SK-N-SH (cell line): ENCODE measurements at regions of chr11 and their contacts with region 1.

Region 1: GRCh38 chr11:7442588-7443215 is 42.6 kb upstream of the OLFML1 start:
- DNase-seq: peak; percentile 67
- H3K4me3 ChIP-seq: peak overlapping the region in 1 of 2 experiments; percentile 19; a peak in 1 of 4 replicates
- H3K27ac ChIP-seq: no peak overlapping the region
- H3K4me1 ChIP-seq: no peaks in the 10 kb centered on the region
- H3K27me3 ChIP-seq: no peaks in the 10 kb centered on the region
- CTCF ChIP-seq: peak; percentile 87
- EP300 ChIP-seq: no peak
- RAD21 ChIP-seq: peak; percentile 94

Region 2: DNA sequence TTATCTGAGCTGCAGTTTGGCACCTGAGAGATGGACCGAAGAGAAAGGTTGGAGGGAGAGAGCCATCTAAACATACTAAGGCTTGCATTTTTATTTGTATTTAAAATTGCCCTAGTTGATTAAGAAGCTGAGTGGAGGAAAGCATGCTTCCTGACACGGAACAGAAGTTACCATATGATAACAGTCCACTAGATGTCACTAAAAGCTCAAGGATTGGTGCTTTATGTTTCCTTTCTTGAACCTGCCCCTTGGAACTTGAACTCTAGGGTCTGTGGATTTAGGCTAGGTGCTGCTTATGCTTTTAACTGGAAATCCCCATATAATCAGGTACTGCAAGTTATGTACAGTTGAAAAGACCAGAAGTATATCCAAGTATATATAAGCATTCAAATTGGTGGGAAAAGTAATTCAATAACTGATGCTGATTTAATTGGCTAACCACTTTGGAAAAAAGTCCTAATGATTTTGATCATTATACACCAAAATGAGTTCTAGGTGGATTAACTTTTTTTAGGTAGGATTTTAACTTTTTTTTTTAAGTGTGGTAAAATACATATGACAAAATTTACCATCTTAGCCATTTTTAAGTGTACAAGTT is 344.4 kb before region 1 on chr11:
- CTCF ChIA-PET with region 1: interaction called, 41 read pairs
- POLR2A ChIA-PET with region 1: no interaction called
- DNase-seq: peak; percentile 55
- H3K4me3 ChIP-seq: peak overlapping the region in 1 of 2 experiments; percentile 16; a peak in 1 of 4 replicates
- H3K27ac ChIP-seq: no peak overlapping the region
- H3K4me1 ChIP-seq: no peaks in the 10 kb centered on the region
- H3K27me3 ChIP-seq: no peaks in the 10 kb centered on the region
- CTCF ChIP-seq: peak; percentile 77
- EP300 ChIP-seq: no peak
- RAD21 ChIP-seq: peak; percentile 94

Region 3: GRCh38 chr11:7143908-7144307 is 298.8 kb before region 1 on chr11:
- CTCF ChIA-PET with region 1: interaction called, 95 read pairs
- POLR2A ChIA-PET with region 1: no interaction called
- DNase-seq: no peak
- H3K4me3 ChIP-seq: no peak overlapping the region
- H3K27ac ChIP-seq: no peak overlapping the region
- H3K4me1 ChIP-seq: no peaks in the 10 kb centered on the region
- H3K27me3 ChIP-seq: no peaks in the 10 kb centered on the region
- CTCF ChIP-seq: peak; percentile 54
- EP300 ChIP-seq: no peak
- RAD21 ChIP-seq: peak; percentile 84

Region 4: DNA sequence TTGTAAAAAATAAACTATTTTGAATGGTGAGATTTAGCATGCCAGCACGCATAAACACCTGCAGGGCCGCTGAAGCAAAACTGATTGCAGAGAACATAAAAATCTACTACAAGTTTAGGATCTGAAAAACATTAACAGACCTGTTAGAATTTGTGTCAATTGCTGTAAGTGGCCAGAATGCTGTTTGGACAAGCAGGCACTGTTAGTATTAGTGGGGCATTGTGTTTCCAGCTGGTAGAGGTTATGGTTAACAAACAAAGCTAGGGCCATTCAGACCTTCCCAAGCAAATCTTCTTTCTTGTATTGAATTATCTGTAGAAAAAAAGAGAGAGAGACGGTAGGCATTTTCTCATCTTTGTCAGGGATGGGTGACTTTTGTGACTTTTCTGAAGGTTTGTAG is 15.0 kb before region 1 on chr11:
- CTCF ChIA-PET with region 1: interaction called, 13 read pairs
- POLR2A ChIA-PET with region 1: no interaction called
- DNase-seq: no peak
- H3K4me3 ChIP-seq: no peak overlapping the region
- H3K27ac ChIP-seq: no peak overlapping the region
- H3K4me1 ChIP-seq: no peaks in the 10 kb centered on the region
- H3K27me3 ChIP-seq: no peaks in the 10 kb centered on the region
- CTCF ChIP-seq: no peak
- EP300 ChIP-seq: no peak
- RAD21 ChIP-seq: no peak

Region 5: GRCh38 chr11:7457211-7457610 is 14.5 kb after region 1 on chr11:
- CTCF ChIA-PET with region 1: interaction called, 19 read pairs
- POLR2A ChIA-PET with region 1: no interaction called
- DNase-seq: no peak
- H3K4me3 ChIP-seq: no peak overlapping the region
- H3K27ac ChIP-seq: no peak overlapping the region
- H3K4me1 ChIP-seq: no peaks in the 10 kb centered on the region; a peak in 1 of 4 replicates
- H3K27me3 ChIP-seq: no peaks in the 10 kb centered on the region
- CTCF ChIP-seq: no peak
- EP300 ChIP-seq: no peak
- RAD21 ChIP-seq: no peak

Region 6: DNA sequence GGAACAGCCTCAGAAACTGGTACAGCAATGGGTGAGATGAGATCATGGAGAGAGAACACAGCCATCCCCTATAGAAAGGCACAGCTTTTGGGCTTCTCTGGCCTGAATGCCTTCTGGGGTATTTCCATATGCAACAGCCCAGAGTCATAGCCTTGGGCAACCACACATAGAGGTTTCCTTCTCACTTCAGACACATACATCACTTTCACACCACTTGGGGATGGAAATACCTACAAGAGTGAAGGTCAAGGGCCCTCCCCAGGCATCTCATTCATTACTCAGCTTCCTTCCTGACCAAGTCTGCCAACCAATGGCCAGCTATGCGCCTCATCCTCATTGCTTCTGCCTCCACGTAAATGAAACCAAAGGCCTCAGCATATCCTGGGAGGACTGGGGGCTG is 24.9 kb after region 1 on chr11:
- CTCF ChIA-PET with region 1: interaction called, 11 read pairs
- POLR2A ChIA-PET with region 1: no interaction called
- DNase-seq: no peak
- H3K4me3 ChIP-seq: no peak overlapping the region
- H3K27ac ChIP-seq: no peak overlapping the region
- H3K4me1 ChIP-seq: peaks cover 0 to 5% of the 10 kb centered on the region in 2 experiments; a peak in 1 of 4 replicates
- H3K27me3 ChIP-seq: no peaks in the 10 kb centered on the region
- CTCF ChIP-seq: no peak
- EP300 ChIP-seq: no peak
- RAD21 ChIP-seq: no peak

Region 7: DNA sequence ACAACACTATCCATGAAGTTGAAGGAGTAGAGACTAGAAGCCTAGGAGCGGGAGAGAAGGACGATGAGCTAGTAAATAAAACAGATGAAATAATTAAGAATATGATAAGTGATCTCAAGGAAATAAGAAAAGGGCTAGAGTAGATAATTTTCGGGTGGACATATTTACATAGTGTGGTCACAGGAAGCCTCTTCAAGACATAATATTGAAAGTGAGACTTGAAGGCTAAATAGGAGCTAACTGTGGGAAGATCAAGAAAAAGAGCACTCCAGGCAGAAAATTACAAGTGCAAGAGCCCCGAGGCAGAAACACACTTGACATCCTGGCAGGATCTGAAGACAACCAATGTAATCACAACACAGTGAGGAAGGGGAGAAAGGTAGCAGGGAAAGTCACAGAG is 59.2 kb after region 1 on chr11:
- CTCF ChIA-PET with region 1: no interaction called
- POLR2A ChIA-PET with region 1: no interaction called
- DNase-seq: no peak
- H3K4me3 ChIP-seq: no peak overlapping the region
- H3K27ac ChIP-seq: no peak overlapping the region
- H3K4me1 ChIP-seq: no peaks in the 10 kb centered on the region
- H3K27me3 ChIP-seq: no peaks in the 10 kb centered on the region
- CTCF ChIP-seq: no peak
- EP300 ChIP-seq: no peak
- RAD21 ChIP-seq: no peak

Region 8: DNA sequence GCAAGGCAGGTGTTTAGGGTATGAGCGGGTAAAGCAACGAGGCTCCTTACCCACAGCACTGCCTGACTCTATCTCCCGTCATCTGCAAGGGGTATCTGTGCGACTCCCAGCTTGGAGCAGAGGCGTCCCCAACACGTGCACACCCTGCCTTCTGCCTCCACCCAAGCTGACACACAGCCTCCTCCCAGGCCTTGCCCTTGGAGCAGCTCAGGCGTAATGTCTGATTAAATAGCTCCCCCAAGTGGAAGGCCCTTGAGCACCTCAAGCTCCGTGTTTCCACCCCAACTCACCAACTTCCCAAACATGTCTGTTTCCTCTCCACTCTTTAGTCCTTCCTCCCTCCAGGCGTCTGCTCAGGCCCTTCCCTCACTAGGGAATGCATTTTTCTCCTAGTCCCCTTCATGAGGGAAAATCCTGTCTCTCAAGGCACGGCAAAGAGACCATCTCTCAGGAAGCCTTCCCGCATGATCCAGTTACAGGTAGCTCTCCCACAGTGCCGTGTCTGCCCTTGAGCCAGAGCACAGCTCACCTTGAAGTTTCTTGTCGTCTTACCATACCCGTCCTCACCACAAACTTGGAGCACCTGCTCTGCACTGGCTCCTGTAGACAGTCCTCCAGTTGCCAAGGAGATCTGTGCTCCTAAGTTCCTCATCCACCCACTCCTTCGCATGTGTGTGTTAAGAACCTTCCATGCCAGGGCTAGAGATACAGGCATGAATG is 214.8 kb after region 1 on chr11:
- CTCF ChIA-PET with region 1: interaction called, 11 read pairs
- POLR2A ChIA-PET with region 1: no interaction called
- DNase-seq: peak; percentile 68
- H3K4me3 ChIP-seq: no peak overlapping the region
- H3K27ac ChIP-seq: no peak overlapping the region
- H3K4me1 ChIP-seq: peaks cover 0 to 40% of the 10 kb centered on the region in 2 experiments; a peak in 1 of 4 replicates
- H3K27me3 ChIP-seq: no peaks in the 10 kb centered on the region
- CTCF ChIP-seq: peak; percentile 56
- EP300 ChIP-seq: no peak
- RAD21 ChIP-seq: peak; percentile 86